Right ventricle myocardium inferior (tissue), 1 donor: ENCODE measurements at regions of chr3 and their contacts with region 1.

Region 1: DNA sequence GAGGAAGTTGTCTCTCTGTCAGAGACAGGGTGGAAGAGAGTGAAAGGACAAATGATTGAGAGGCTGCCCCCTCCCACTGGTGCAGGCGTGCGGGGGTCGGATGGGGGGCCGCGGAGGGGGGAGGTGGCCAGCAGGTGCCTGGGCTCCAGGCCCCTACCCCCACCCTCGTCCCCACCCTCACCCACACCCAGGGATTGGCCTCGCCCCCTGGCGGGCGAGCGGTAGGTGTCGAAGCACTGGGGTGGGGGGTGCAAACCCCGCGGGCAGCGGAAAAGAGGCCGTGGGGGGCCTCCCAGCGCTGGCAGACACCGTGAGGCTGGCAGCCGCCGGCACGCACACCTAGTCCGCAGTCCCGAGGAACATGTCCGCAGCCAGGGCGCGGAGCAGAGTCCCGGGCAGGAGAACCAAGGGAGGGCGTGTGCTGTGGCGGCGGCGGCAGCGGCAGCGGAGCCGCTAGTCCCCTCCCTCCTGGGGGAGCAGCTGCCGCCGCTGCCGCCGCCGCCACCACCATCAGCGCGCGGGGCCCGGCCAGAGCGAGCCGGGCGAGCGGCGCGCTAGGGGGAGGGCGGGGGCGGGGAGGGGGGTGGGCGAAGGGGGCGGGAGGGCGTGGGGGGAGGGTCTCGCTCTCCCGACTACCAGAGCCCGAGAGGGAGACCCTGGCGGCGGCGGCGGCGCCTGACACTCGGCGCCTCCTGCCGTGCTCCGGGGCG is at the start of gene KAT2B:
- DNase-seq: peak; percentile 90
- ATAC-seq: peak; percentile 78
- total RNA-seq, gene KAT2B: 118 TPM

Region 2: DNA sequence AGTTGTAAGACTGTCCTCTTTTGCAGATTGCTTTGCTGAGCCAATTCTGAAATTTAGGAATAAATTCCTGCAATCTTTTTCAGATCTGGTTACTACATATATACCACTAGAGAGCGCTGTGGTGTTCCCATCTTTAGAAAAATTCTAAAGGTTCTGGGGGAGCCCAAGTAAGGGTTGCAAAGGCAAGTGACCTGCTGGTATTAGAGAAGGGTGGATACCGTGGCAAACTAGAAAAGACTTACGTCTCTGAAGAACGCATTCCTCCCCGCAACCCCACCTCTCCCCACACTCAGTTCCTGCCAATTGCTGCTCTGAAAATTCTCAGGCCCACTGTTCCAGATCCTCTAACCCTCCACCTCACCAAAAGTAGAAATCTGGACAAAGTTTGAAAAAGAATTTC is 154.5 kb before region 1 on chr3:
- intact Hi-C with region 1: loop called (anchors 5 kb)
- DNase-seq: no peak
- ATAC-seq: no peak

Region 3: GRCh38 chr3:19946832-19947548 is 92.9 kb before region 1 on chr3 and contains the start of gene RAB5A:
- intact Hi-C with region 1: loop called (anchors 2 kb)
- DNase-seq: peak; percentile 99
- ATAC-seq: peak; percentile 98
- total RNA-seq, gene RAB5A: 48.2 TPM

Region 4: DNA sequence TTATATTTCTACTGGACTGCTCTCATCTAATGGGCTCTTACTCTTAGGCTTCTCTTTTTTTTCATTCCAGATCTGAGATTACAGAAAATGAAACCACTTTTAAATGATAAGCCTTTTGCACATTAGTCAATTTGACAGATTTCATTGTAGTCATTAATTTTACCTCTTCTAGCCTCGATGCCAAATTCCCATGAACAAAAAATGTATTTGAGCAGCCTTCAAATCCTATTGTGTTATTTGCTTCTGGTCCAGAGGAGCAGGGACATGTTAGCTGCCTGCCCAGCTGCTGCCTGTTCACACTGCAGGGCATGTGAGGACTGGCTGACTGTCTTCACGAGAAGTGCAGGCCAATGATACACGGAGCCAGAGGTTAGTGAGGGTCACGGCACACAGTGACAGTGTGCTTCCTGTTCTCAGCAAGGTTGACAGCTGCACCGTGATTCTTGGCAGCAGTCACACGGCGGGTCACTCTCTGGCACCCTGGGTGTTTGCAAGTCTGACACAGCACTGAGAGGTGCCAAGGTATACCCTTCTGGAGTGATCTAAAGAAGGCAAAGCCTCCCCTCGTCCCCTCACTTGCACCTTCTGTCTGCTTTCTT is 41.1 kb after region 1 on chr3:
- intact Hi-C with region 1: loop called (anchors 2 kb)
- DNase-seq: peak; percentile 85
- ATAC-seq: peak; percentile 99

Region 5: DNA sequence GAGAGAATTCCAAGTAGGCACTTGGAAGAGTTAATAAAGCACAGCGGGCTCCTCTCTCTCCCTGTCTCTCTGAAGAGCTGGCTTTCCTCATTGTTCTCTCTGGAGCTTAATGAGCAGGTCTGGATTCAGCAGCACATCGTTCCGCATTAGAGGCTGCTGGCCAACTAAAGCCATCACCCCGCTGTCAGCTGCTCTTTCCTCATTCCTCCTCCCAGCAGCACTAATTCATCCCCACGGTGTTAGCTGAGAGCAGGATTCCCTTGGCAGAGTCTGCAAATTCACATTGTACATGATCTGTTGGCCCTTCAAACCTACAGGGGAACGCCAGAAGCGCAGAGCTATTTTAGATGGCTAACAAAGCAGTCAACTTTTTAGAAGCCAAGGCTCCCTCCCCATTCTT is 101.9 kb after region 1 on chr3:
- intact Hi-C with region 1: loop called (anchors 2 kb)
- DNase-seq: peak; percentile 68
- ATAC-seq: peak; percentile 95

Region 6: GRCh38 chr3:20185701-20186598 is 146.0 kb after region 1 on chr3 and contains the start of gene SGO1:
- intact Hi-C with region 1: loop called (anchors 5 kb)
- DNase-seq: peak; percentile 100
- ATAC-seq: peak; percentile 100
- total RNA-seq, gene SGO1: 0.43 TPM